Activated B cell treated with CpG ODN at 0.5 μM for 24 hours (primary cell): ENCODE measurements at regions of chr17 and their contacts with region 1.

Region 1: GRCh38 chr17:82775001-82775823 is 23.3 kb downstream of the TBCD start:
- DNase-seq: peak; percentile 42
- ATAC-seq: peak; percentile 89
- H3K4me3 Mint-ChIP-seq: peak overlapping the region; percentile 35
- H3K27ac Mint-ChIP-seq: peak overlapping the region; percentile 50
- H3K4me1 Mint-ChIP-seq: peaks cover 29% of the 10 kb centered on the region
- H3K27me3 Mint-ChIP-seq: no peaks in the 10 kb centered on the region
- CTCF ChIP-seq: no peak

Region 2: GRCh38 chr17:82351716-82352488 is 423.3 kb before region 1 on chr17:
- CTCF ChIA-PET with region 1: interaction called, 7 read pairs
- POLR2A ChIA-PET with region 1: no interaction called
- intact Hi-C with region 1: loop called (anchors 5 kb)
- DNase-seq: peak; percentile 67
- ATAC-seq: peak; percentile 91
- H3K4me3 Mint-ChIP-seq: no peak overlapping the region
- H3K27ac Mint-ChIP-seq: no peak overlapping the region
- H3K4me1 Mint-ChIP-seq: peaks cover 9% of the 10 kb centered on the region
- H3K27me3 Mint-ChIP-seq: peaks cover 13% of the 10 kb centered on the region
- CTCF ChIP-seq: peak; percentile 70

Region 3: DNA sequence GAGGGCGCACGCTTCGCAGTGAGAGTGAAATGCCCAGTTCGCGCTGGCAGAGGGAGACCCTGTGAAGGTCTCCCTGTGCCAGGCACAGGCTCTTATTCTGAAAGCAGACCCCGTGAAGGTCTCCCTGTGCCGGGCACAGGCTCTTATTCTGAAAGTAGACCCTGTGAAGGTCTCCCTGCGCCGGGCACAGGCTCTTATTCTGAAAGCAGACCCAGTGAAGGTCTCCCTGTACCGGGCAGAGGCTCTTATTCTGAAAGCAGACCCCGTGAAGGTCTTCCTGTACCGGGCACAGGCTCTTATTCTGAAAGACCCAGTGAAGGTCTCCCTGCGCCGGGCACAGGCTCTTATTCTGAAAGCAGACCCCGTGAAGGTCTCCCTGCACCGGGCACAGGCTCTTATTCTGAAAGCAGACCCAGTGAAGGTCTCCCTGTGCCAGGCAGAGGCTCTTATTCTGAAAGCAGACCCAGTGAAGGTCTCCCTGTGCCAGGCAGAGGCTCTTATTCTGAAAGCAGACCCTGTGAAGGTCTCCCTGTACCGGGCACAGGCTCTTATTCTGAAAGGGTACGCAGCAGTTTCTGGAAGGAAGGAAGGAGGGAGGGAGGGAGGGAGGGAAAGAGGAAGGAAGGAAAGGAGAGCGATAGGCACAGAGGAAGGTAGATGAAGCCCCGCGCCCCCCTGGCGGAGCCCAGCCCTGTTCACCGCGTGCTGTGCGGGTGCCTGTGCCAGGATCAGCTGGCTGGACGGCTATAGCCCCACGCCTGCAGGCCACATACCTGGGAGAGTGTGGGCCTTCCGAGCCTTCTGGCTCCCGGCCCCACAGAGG is 182.2 kb before region 1 on chr17:
- CTCF ChIA-PET with region 1: no interaction called
- POLR2A ChIA-PET with region 1: no interaction called
- intact Hi-C with region 1: no loop called
- DNase-seq: peak; percentile 43
- ATAC-seq: peak; percentile 61
- H3K4me3 Mint-ChIP-seq: peak overlapping the region; percentile 72
- H3K27ac Mint-ChIP-seq: peak overlapping the region; percentile 85
- H3K4me1 Mint-ChIP-seq: peaks cover 51% of the 10 kb centered on the region
- H3K27me3 Mint-ChIP-seq: no peaks in the 10 kb centered on the region
- CTCF ChIP-seq: no peak

Region 4: GRCh38 chr17:82668631-82669099 is 106.5 kb before region 1 on chr17:
- CTCF ChIA-PET with region 1: interaction called, 5 read pairs
- POLR2A ChIA-PET with region 1: no interaction called
- intact Hi-C with region 1: loop called (anchors 1 kb)
- DNase-seq: peak; percentile 33
- ATAC-seq: peak; percentile 98
- H3K4me3 Mint-ChIP-seq: peak overlapping the region; percentile 67
- H3K27ac Mint-ChIP-seq: peak overlapping the region; percentile 30
- H3K4me1 Mint-ChIP-seq: peaks cover 6% of the 10 kb centered on the region
- H3K27me3 Mint-ChIP-seq: peaks cover 2% of the 10 kb centered on the region
- CTCF ChIP-seq: no peak

Region 5: DNA sequence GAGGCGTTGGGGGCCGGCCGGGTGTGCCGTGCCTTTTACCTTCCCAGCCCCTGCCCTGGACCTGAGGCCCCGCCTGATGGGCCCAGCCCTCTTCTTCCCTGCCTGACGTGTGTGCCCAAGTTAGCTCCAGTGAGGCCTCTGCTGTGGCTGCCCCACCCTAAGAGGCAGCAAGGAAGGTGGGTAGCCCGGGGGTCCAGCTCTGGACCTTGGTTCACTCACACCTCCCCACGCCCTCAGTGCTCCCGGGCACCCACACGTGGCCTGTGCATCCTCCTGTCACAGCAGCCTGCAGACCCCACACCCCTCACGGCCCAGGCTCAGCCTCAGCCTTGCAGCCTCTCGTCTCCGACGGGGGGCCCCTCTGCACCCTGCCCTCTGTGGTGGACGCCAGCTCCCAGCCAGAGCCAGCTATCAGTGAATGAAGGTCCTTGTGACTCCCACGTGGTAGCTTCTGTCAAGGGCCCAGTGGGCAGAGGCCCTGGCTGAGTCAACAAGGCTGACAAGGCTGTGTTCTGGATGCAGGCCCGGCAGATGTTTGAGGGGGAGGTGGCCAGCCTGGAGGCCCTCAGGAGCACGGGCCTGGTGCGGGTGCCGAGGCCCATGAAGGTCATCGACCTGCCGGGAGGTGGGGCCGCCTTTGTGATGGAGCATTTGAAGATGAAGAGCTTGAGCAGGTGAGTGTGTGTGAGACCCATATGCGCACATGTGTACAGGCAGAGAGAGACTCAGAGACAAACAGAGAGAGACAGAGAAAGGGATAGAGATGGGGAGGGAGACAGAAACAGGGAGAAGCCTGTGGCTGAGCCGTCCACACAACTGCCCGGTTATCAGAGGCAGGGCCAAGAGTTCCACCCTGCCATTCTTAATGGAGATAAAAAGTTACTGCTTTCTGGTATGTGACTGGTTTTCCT is 37.0 kb before region 1 on chr17:
- CTCF ChIA-PET with region 1: no interaction called
- POLR2A ChIA-PET with region 1: no interaction called
- intact Hi-C with region 1: no loop called
- DNase-seq: no peak
- ATAC-seq: no peak
- H3K4me3 Mint-ChIP-seq: no peak overlapping the region
- H3K27ac Mint-ChIP-seq: no peak overlapping the region
- H3K4me1 Mint-ChIP-seq: peaks cover 6% of the 10 kb centered on the region
- H3K27me3 Mint-ChIP-seq: peaks cover 6% of the 10 kb centered on the region
- CTCF ChIP-seq: no peak

Region 6: GRCh38 chr17:83161298-83162034 is 386.3 kb after region 1 on chr17:
- CTCF ChIA-PET with region 1: no interaction called
- POLR2A ChIA-PET with region 1: no interaction called
- intact Hi-C with region 1: no loop called
- DNase-seq: no peak
- ATAC-seq: no peak
- H3K4me3 Mint-ChIP-seq: no peak overlapping the region
- H3K27ac Mint-ChIP-seq: no peak overlapping the region
- H3K4me1 Mint-ChIP-seq: no peaks in the 10 kb centered on the region
- H3K27me3 Mint-ChIP-seq: peaks cover 35% of the 10 kb centered on the region
- CTCF ChIP-seq: no peak